Psoas muscle (tissue), 8 donors: ENCODE measurements at regions of chr11 and their contacts with region 1.

Region 1: GRCh38 chr11:10322830-10323792 is 18.2 kb downstream of the ADM start:
- DNase-seq: peak; percentile 53 to 70
- ATAC-seq: peak; percentile 56 to 81 (median 58)
- H3K4me3 ChIP-seq: no peak overlapping the region
- H3K27ac ChIP-seq: peak overlapping the region; percentile 56
- H3K4me1 ChIP-seq: peaks cover 22% of the 10 kb centered on the region
- H3K27me3 ChIP-seq: no peaks in the 10 kb centered on the region
- CTCF ChIP-seq: peak; percentile 60

Region 2: DNA sequence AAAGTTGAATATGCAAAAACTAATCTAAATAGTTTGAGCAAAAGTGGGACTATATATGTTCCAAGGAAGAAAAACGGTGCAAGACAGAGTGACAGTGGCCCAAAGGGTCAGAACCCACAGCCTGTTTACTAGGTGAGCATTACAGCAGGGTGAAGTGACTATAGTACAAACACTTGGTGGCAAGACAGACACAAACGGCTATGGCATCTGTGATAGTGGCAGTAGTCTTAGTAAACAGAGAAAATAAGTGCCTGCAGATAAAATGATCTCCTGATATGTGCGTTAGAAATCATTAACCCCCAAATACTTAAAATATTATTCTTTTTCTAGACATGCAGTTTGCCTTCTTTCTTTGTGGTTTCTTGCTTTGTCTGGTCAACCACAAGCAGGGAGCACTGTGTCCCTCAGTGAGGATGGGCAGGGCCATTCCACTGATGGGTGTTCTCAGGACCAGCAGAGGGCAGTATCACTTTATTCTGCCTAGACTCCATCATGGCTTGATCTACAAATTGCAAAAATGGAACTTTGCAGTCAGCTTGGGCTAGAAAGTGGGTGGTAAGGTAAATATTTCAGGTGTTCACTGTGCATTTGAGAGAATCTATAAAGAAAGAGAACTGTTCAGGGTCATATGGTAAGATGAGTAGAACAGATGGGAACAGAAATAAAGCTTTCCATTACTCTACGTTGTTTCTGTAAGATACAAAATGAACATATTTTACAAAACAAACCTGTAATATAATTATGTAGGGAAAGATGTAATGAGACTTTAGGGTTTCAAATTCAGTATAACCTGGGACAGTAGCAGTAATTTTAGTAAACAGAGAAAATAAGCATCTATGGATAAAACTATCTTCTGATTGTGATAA is 461.0 kb before region 1 on chr11:
- intact Hi-C with region 1: loop called (anchors 5 kb)
- DNase-seq: peak; percentile 26 to 57
- ATAC-seq: peak; percentile 75 to 91 (median 80)
- H3K4me3 ChIP-seq: no peak overlapping the region
- H3K27ac ChIP-seq: no peak overlapping the region
- H3K4me1 ChIP-seq: no peaks in the 10 kb centered on the region
- H3K27me3 ChIP-seq: no peaks in the 10 kb centered on the region
- CTCF ChIP-seq: peak; percentile 63

Region 3: GRCh38 chr11:9990221-9990975 is 332.7 kb before region 1 on chr11:
- intact Hi-C with region 1: loop called in 1 of 2 experiments (anchors 5 kb)
- DNase-seq: no peak
- ATAC-seq: no peak
- H3K4me3 ChIP-seq: no peak overlapping the region
- H3K27ac ChIP-seq: no peak overlapping the region
- H3K4me1 ChIP-seq: no peaks in the 10 kb centered on the region
- H3K27me3 ChIP-seq: no peaks in the 10 kb centered on the region
- CTCF ChIP-seq: no peak

Region 4: DNA sequence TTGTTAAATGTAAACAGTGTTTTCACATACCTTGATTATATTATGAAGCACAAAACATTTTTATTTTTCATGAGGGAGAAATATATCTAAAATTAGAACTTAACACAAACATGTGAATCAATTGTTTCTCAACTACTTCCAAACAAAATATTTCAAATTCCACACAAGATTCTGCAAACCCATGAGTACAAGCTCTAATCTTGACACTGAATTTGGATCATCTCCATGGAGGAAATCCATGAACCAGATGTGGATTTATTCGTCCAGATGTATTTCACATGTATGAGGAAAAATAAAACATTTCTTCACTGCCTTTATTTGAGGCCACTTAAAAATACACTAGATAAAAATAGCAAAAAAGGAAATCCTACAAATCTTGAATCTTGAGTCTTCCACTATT is 213.3 kb before region 1 on chr11:
- intact Hi-C with region 1: loop called in 1 of 2 experiments (anchors 10 kb)
- DNase-seq: no peak
- ATAC-seq: peak in 1 of 4 donors; percentile 50
- H3K4me3 ChIP-seq: no peak overlapping the region
- H3K27ac ChIP-seq: peak overlapping the region; percentile 50
- H3K4me1 ChIP-seq: peaks cover 19% of the 10 kb centered on the region
- H3K27me3 ChIP-seq: no peaks in the 10 kb centered on the region
- CTCF ChIP-seq: no peak

Region 5: DNA sequence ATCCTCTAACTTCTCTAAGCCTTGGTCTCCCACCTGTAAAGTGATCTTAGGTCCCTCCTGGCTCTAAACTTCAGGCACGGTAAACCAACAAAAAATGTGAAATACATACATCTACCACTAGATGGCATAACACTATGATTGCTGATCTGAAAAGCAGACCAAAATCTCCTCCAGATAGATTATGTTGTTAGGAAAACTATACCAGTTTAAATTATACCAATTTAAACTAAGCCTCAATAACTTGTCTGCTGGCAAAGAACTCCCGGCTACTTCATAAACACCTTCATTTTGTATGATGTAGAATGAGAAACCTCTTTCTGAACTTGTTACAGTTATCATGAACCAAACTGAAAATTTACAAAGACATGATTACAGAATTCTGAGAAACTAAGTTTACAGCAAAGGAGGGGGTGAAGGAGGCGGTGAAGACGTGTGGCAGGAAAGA is 115.0 kb before region 1 on chr11:
- intact Hi-C with region 1: loop called in 1 of 2 experiments (anchors 5 kb)
- DNase-seq: no peak
- ATAC-seq: peak; percentile 53 to 82 (median 64)
- H3K4me3 ChIP-seq: no peak overlapping the region
- H3K27ac ChIP-seq: no peak overlapping the region
- H3K4me1 ChIP-seq: peaks cover 4% of the 10 kb centered on the region
- H3K27me3 ChIP-seq: no peaks in the 10 kb centered on the region
- CTCF ChIP-seq: peak; percentile 82